ENCODE measurements at regions of chr20 and their contacts with region 1.

Region 1: DNA sequence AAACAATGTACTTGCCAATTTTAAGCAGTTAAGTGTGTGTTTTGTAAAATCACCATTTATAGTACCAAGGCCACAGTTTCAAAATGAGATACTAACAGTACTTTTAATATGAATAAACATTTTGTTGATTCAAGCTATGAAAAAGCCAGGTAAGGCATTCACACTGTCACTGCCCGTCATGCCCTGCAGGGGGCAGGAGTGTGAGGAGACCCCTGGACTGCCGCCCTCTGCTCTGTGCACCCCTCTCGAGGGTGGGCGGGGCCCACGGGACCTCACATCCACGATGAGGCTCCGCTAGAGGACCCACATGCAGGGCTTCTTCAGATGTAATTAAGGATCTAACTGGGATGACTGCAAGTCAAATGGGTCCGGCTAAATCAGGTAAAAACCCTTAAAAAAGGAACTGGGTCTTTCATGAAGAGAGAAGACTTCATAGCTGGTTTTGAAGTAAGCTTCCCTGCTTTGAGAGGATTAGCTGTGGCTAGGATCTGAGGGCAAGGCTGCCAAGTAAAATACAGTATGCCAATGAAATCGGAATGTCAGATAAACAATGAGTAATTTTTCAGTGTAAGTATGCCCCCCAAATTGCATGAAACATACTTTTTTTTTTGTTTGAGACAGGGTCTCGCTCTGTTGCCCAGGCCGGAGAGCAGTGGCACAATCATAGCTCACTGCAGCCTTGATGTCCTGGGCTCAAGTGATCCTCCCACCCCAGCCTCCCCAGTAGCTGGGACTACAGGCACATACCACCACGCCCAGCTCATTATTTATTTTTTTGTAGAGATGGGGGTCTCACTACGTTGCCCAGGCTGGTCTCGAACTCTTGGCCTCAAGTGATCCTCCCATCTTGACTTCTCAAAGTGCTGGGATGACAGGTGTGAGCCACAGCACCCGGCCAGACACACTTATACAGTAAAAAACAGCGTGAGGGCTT is 18.7 kb downstream of the DIDO1 start:
- DNase-seq: peak; percentile 48

Region 2: GRCh38 chr20:62929051-62929538 is 21.4 kb after region 1 on chr20:
- intact Hi-C with region 1: no loop called
- DNase-seq: no peak

Region 3: DNA sequence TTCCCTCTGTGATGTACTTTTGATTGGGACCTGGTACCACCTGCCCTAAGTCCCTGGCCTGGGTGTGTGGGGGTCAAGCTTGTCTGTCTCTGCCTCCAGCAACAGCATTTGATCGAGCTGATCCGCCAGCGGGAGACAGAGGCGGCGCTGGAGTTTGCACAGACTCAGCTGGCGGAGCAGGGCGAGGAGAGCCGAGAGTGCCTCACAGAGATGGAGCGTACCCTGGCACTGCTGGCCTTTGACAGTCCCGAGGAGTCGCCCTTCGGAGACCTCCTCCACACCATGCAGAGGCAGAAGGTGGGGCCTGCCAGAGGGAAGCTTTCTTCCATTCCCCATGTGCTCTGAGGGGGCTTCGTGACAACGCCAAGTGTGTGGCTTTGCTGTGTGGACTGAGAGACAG is 35.7 kb after region 1 on chr20:
- intact Hi-C with region 1: loop called in 1 of 2 experiments (anchors 5 kb)
- DNase-seq: no peak

Measured in posterior vena cava (tissue), 2 donors.